ENCODE measurements at regions of chr2 and their contacts with region 1.

Region 1: GRCh38 chr2:64767670-64768468 is 114.2 kb upstream of the SERTAD2 start:
- DNase-seq: peak; percentile 76 to 91 (median 82)
- ATAC-seq: peak; percentile 90
- H3K4me3 ChIP-seq: peak overlapping the region; percentile 61
- H3K27ac ChIP-seq: peak overlapping the region; percentile 77
- H3K4me1 ChIP-seq: peaks cover 31 to 52% of the 10 kb centered on the region in 2 experiments
- H3K27me3 ChIP-seq: no peaks in the 10 kb centered on the region
- CTCF ChIP-seq: peak in 2 of 3 experiments; percentile 33 to 41; a peak in 4 of 6 replicates
- EP300 ChIP-seq: 0 out of 2 replicates have a peak, but pooled peaks have one; percentile 13
- POLR2A ChIP-seq: peak; percentile 77
- RAD21 ChIP-seq: peak in 1 of 2 experiments; percentile 54; a peak in 2 of 4 replicates

Region 2: GRCh38 chr2:64750817-64751285 is 17.0 kb before region 1 on chr2:
- CTCF ChIA-PET with region 1: no interaction called
- POLR2A ChIA-PET with region 1: interaction called, 30 read pairs
- in situ Hi-C with region 1: no loop called
- intact Hi-C with region 1: loop called (anchors 2 kb)
- DNase-seq: peak; percentile 97 to 99 (median 97)
- ATAC-seq: peak; percentile 91
- H3K4me3 ChIP-seq: peak overlapping the region; percentile 79
- H3K27ac ChIP-seq: peak overlapping the region; percentile 84
- H3K4me1 ChIP-seq: peaks cover 11 to 18% of the 10 kb centered on the region in 2 experiments; a peak in 4 of 5 replicates
- H3K27me3 ChIP-seq: no peaks in the 10 kb centered on the region
- CTCF ChIP-seq: peak in 1 of 3 experiments; percentile 53; a peak in 2 of 6 replicates
- EP300 ChIP-seq: no peak
- POLR2A ChIP-seq: no peak
- RAD21 ChIP-seq: peak in 1 of 2 experiments; percentile 55; a peak in 2 of 4 replicates

Region 3: GRCh38 chr2:64831134-64831976 is 63.5 kb after region 1 on chr2:
- CTCF ChIA-PET with region 1: interaction called, 3 read pairs
- POLR2A ChIA-PET with region 1: interaction called, 6 read pairs
- in situ Hi-C with region 1: no loop called
- intact Hi-C with region 1: loop called (anchors 2 kb)
- DNase-seq: peak; percentile 90 to 94 (median 92)
- ATAC-seq: peak; percentile 99
- H3K4me3 ChIP-seq: no peak overlapping the region
- H3K27ac ChIP-seq: peak overlapping the region; percentile 94
- H3K4me1 ChIP-seq: peaks cover 10 to 27% of the 10 kb centered on the region in 2 experiments
- H3K27me3 ChIP-seq: no peaks in the 10 kb centered on the region
- CTCF ChIP-seq: peak; percentile 91 to 98 (median 91)
- EP300 ChIP-seq: peak; percentile 29; the same call in 1 of the 2 replicates
- POLR2A ChIP-seq: 0 out of 2 replicates have a peak, but pooled peaks have one; percentile 52
- RAD21 ChIP-seq: peak; percentile 79 to 80

Region 4: GRCh38 chr2:64859312-64860212 is 91.7 kb after region 1 on chr2:
- CTCF ChIA-PET with region 1: no interaction called
- POLR2A ChIA-PET with region 1: no interaction called
- in situ Hi-C with region 1: no loop called
- intact Hi-C with region 1: loop called (anchors 5 kb)
- DNase-seq: peak; percentile 76 to 92 (median 91)
- ATAC-seq: peak; percentile 92
- H3K4me3 ChIP-seq: peak overlapping the region; percentile 29
- H3K27ac ChIP-seq: peak overlapping the region; percentile 67
- H3K4me1 ChIP-seq: peaks cover 28 to 33% of the 10 kb centered on the region in 2 experiments
- H3K27me3 ChIP-seq: no peaks in the 10 kb centered on the region
- CTCF ChIP-seq: peak in 2 of 3 experiments; percentile 9 to 22; a peak in 1 of 6 replicates
- EP300 ChIP-seq: no peak
- POLR2A ChIP-seq: peak; percentile 68; the same call in 1 of the 2 replicates
- RAD21 ChIP-seq: peak in 1 of 2 experiments; percentile 22; a peak in 2 of 4 replicates